Right ventricle myocardium superior (tissue), 1 donor: ENCODE measurements at regions of chr5 and their contacts with region 1.

Region 1: DNA sequence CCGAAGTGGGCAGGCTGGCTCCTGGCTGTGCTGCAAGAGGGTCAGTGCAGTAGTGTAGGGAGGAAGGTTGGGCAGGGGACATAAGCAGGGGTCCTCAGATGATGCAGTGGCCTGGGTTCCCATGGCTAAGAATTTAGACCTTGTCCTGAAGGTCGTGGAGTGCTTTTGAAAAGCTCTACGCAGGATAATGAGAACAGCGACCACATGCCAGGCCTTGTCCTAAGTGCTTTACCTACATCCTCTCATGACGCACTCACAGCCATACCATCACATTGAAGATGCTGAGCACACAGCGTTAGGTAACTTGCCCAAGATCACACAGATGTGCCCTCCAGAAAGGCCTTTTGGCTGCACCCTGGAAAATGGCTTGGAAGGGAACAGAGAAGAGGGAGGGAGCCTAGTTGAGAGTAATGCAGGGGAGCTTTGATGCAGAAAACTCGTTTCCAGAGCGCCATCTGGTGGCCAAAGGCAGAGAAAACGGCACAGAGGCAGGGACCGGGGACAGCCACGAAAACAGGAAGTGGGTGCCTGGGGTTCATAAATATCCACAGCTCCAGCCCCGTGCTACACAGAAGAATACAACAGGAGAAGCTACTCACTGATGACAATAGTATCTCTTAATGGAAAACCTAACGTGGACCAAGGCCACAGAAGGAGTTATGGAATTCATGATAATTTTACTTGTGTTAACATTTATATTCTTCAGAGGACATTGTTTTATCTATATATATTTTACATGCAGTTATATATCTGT is 2.6 kb upstream of the PCDH12 start:
- DNase-seq: peak; percentile 92
- ATAC-seq: peak; percentile 89

Region 2: DNA sequence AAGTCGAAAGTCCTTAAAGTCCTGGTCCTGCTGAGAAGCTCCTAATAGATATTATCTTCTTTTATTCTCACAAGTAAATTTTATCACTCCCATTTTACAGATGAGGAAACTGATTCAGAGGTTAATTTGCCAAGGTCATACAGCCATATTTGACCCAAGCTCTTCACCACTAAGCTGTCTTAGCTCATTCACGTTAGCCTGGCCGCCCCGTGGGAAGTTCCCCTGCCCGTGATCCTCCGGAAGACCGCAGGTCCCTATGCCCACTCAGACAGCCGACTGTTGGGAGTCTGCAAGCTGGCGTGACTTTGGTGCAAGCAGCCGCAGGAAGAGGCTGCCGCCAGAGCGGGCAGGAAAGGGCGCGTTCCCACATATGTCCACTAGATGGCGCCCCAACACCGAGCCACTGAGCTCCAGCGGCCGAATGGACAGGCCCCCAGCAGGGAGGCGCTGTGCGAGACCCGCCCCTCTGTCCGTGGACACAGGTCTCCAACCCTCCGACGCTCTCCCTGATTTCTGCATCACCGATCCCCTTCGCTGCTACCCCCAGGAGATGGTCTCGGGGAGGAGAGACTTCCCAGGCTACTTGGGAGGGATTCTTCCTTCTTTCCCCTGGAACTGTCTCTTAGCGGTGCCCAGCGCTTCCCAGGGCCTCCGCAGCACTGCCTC is 268.6 kb before region 1 on chr5:
- intact Hi-C with region 1: loop called (anchors 5 kb)
- DNase-seq: peak; percentile 92
- ATAC-seq: peak; percentile 90

Region 3: GRCh38 chr5:141923448-141924352 is 36.9 kb before region 1 on chr5 and contains the start of gene DELE1:
- intact Hi-C with region 1: loop called (anchors 5 kb)
- DNase-seq: peak; percentile 98
- ATAC-seq: peak; percentile 99
- total RNA-seq, gene DELE1: 99.4 TPM